ENCODE measurements at regions of chr7 and their contacts with region 1.

Region 1: GRCh38 chr7:95684037-95684436 is 87.7 kb upstream of the PDK4 start:
- DNase-seq: no peak
- ATAC-seq: peak; percentile 39 to 67
- H3K4me3 ChIP-seq: no peak overlapping the region
- H3K27ac ChIP-seq: peak overlapping the region; percentile 7 to 65 (median 56)
- H3K4me1 ChIP-seq: peaks cover 18 to 37% of the 10 kb centered on the region in 2 donors
- H3K27me3 ChIP-seq: no peaks in the 10 kb centered on the region
- CTCF ChIP-seq: peak; percentile 47 to 67 (median 65)
- POLR2A ChIP-seq: no peak

Region 2: DNA sequence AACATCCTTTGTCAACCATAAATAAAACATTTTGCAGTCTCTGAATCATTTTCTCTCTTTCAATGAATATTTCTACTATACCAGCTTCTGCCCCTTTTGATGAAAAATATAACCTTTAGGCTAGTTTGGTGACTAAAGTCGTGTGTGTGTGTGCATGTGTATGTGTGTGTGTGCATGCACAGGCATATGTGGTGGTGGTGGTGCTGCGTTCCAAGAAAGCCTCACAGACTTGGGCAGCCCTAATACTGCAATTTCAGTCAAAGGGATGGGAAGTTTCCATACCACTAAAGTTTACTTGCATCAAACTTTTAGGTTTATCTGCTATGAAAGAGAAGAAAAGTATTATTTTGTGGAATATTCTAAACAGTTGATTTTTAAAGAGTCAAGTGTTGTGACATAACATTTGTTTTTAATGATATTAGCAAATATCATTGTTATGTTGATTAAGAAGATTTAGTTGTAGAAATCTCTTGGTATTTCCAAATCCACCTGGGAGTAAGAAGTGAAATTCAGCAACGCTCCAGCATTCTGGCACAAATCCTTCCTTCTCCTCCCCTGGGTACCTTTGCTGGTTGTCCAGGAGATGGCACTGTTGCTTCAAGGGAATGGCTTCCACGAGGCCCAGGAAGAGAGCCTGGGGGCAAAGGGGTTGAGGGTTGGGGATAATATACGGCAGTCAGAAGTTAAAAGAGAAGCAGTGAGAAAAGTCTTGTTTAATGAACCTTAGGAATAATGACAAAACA is 156.8 kb before region 1 on chr7:
- in situ Hi-C with region 1: loop called in 2 of 4 experiments (anchors 5 kb)
- intact Hi-C with region 1: loop called (anchors 1 kb)
- DNase-seq: peak; percentile 30 to 42
- ATAC-seq: peak; percentile 87 to 95
- H3K4me3 ChIP-seq: no peak overlapping the region
- H3K27ac ChIP-seq: no peak overlapping the region
- H3K4me1 ChIP-seq: peaks cover 9 to 25% of the 10 kb centered on the region in 2 donors
- H3K27me3 ChIP-seq: no peaks in the 10 kb centered on the region
- CTCF ChIP-seq: peak; percentile 87 to 96 (median 89)
- POLR2A ChIP-seq: no peak

Region 3: DNA sequence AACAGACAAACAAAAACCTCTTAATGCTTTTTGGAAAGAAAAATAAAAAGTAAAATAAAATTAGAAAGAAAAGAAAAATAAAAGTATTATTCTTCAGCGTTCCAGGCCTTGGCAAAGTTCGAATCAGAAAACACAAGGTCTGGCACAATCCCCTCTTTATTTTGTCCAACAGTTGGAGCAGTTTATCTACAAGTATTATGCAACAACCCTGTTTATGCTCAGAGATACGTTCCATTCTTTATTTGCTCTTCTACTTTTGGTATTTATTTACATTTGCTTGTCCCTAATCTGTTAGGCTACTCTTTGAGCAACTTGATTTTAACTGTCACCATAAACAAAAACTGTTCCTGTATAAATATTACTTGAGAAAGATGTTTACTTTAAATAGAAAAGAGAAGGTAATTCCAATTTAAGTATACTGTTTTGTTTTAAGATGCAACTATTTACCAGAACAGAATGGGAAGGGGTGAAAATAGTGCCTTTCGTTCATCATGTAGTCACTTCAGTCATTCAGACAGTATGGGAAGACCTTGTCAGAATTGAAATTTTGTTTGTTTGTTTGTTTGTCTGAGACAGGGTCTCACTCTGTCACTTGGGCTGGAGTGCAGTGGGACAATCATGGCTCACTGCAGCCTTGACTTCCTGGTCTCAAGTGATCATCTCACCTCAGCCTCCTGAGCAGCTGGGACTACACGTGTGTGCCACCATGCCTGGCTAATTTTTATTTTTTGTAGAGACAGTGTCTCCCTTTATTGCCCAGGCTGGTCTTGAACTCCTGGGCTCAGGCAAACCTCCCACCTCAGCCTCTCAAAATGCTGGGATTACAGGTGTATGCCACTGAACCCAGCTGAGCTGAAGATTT is 93.4 kb before region 1 on chr7:
- in situ Hi-C with region 1: loop called in 3 of 4 experiments (anchors 5 to 10 kb)
- intact Hi-C with region 1: no loop called
- DNase-seq: no peak
- ATAC-seq: peak in 1 of 2 donors; percentile 35
- H3K4me3 ChIP-seq: peak overlapping the region; percentile 78 to 94 (median 87)
- H3K27ac ChIP-seq: peak overlapping the region; percentile 91 to 97 (median 96)
- H3K4me1 ChIP-seq: peaks cover 6 to 35% of the 10 kb centered on the region in 2 donors
- H3K27me3 ChIP-seq: no peaks in the 10 kb centered on the region
- CTCF ChIP-seq: no peak
- POLR2A ChIP-seq: peak; percentile 12 to 38

Measured in gastrocnemius medialis (tissue), 4 donors.